Uterus (tissue), 4 donors: ENCODE measurements at regions of chr20 and their contacts with region 1.

Region 1: DNA sequence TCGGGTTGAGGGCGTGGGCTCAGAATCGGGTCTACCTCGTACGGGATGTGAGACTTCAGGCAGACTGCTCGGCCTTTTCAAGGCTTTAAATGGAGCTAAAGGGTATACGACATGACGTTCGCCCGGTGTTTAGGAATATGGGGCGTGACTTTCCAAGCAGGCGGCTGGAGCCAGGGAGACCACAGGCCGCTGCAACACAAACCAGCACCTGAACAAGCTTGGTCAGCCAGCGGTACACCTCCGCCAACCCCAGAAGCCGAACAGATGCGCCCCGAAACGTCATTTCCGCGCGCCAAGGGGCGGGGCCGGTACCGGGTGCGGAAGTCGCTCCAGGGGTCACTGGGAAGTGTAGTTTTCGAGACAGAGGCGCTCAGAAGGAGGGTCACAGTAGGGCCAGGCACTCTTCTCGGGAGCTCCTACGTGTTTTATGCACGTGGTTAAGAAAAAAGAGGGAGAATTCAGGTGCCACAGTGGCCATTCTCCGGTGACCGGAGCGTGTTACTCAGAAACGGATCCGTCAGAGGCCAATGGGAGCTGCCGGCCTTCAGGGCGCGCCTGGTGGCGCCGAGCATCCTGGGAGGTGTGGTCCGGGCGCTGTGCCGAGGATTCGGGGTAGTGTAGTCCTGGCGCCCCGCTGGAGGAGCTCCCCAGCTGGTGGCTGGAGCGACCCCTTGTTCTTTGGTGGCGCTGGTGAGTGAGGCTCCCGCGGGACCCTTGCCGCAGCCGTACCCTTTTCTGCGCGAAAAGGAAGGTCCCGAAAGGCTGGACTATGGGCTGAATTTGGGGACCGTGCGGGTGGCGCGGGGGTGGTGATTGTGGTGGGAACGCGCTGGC is at the start of gene ZNF133:
- DNase-seq: peak; percentile 96
- H3K4me3 ChIP-seq: peak within 1 kb of the TSS; percentile 69 to 96
- H3K27ac ChIP-seq: peak within 1 kb of the TSS; percentile 93 to 95
- H3K4me1 ChIP-seq: no peaks in the 10 kb centered on the region
- H3K27me3 ChIP-seq: no peaks in the 10 kb centered on the region
- CTCF ChIP-seq: peak in 3 of 4 experiments; percentile 5 to 17 (median 8)
- POLR2A ChIP-seq: peak; percentile 45 to 72
- total RNA-seq, gene ZNF133: 11.2 to 49.2 (median 22.4) TPM

Region 2: DNA sequence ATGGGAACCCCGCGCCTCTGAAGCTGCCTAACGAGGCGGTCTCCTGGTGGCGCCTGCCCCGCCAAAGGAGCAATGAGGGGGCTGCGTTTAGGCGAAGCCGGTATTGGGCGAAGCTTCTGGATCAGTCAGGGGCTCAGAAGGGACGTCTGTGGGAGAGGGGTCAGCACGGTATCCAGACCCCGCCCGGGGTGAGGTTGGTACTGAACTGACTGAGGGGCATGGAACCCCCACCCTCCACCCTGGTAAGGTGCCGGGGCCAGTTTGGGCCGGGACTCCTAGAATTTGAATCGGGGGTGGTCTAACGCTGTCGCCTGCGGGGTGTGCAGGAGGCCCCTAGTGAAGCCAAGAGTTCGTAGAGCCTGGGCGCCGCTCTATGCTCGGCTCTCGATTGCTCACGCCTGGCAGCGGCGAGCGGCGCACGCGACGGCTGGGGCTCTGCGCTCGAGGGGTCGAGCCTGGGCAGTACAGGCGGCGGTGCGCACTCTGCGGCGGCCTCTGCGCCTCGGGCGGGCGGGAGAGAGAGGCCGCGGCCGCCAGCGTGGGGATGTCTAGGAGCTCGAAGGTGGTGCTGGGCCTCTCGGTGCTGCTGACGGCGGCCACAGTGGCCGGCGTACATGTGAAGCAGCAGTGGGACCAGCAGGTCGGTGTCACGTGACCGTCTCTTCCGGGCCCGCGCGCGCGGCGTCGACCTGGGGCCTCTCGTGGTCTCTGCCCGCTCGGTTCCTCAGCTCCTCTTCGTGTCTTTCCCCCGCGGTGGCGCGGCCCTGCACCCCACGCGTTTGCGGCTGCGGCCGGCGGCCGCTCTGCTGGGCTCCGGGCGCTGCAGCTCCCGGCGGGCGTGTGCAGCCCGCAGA is 150.5 kb before region 1 on chr20 and contains the starts of genes KAT14 and PET117:
- intact Hi-C with region 1: loop called (anchors 10 kb)
- DNase-seq: peak; percentile 82 to 90
- H3K4me3 ChIP-seq: peak within 1 kb of the TSS; percentile 93 to 95
- H3K27ac ChIP-seq: peak within 1 kb of the TSS; percentile 85 to 91
- H3K4me1 ChIP-seq: no peaks in the 10 kb centered on the region
- H3K27me3 ChIP-seq: no peaks in the 10 kb centered on the region
- CTCF ChIP-seq: peak in 1 of 4 experiments; percentile 9
- POLR2A ChIP-seq: peak in 1 of 2 donors; percentile 79
- total RNA-seq, gene KAT14: 5.6 to 23.3 (median 18.0) TPM
- total RNA-seq, gene PET117: 5.1 to 21.8 (median 13.0) TPM

Region 3: GRCh38 chr20:18197382-18198131 is 90.6 kb before region 1 on chr20:
- intact Hi-C with region 1: no loop called
- DNase-seq: no peak
- H3K4me3 ChIP-seq: no peak overlapping the region
- H3K27ac ChIP-seq: no peak overlapping the region
- H3K4me1 ChIP-seq: no peaks in the 10 kb centered on the region
- H3K27me3 ChIP-seq: no peaks in the 10 kb centered on the region
- CTCF ChIP-seq: no peak
- POLR2A ChIP-seq: no peak

Region 4: GRCh38 chr20:18380908-18381529 is 92.9 kb after region 1 on chr20:
- intact Hi-C with region 1: no loop called
- DNase-seq: no peak
- H3K4me3 ChIP-seq: no peak overlapping the region
- H3K27ac ChIP-seq: no peak overlapping the region
- H3K4me1 ChIP-seq: no peaks in the 10 kb centered on the region
- H3K27me3 ChIP-seq: no peaks in the 10 kb centered on the region
- CTCF ChIP-seq: no peak
- POLR2A ChIP-seq: no peak

Region 5: DNA sequence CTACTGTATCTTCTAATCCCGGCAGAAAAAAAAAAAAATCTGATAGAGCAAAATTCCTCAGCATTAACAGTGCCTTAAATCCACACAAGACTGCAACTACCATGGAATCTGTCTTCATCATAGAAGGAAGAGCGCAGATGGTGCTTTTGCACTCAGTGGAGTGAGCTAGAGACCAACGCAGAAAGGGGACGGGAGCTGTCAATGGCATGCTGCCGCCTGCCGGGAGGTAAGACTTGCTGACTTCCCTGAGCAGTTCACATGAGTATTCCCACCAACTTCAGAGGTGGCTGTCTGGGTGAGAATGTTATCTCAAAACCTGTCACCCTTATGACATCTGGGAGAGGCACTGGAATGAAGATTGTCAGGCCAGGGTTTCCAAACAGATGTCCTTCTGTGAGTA is 143.1 kb after region 1 on chr20:
- intact Hi-C with region 1: no loop called
- DNase-seq: no peak
- H3K4me3 ChIP-seq: no peak overlapping the region
- H3K27ac ChIP-seq: no peak overlapping the region
- H3K4me1 ChIP-seq: no peaks in the 10 kb centered on the region
- H3K27me3 ChIP-seq: no peaks in the 10 kb centered on the region
- CTCF ChIP-seq: no peak
- POLR2A ChIP-seq: no peak